ENCODE measurements at regions of chr20 and their contacts with region 1.

Region 1: GRCh38 chr20:21395666-21396598 is 1.4 kb downstream of the NKX2-4 start:
- DNase-seq: peak; percentile 43
- H3K4me3 Mint-ChIP-seq: peak overlapping the region; percentile 77
- H3K27ac Mint-ChIP-seq: peak overlapping the region; percentile 73
- H3K4me1 Mint-ChIP-seq: peaks cover 38% of the 10 kb centered on the region
- H3K27me3 Mint-ChIP-seq: peaks cover 77% of the 10 kb centered on the region

Region 2: DNA sequence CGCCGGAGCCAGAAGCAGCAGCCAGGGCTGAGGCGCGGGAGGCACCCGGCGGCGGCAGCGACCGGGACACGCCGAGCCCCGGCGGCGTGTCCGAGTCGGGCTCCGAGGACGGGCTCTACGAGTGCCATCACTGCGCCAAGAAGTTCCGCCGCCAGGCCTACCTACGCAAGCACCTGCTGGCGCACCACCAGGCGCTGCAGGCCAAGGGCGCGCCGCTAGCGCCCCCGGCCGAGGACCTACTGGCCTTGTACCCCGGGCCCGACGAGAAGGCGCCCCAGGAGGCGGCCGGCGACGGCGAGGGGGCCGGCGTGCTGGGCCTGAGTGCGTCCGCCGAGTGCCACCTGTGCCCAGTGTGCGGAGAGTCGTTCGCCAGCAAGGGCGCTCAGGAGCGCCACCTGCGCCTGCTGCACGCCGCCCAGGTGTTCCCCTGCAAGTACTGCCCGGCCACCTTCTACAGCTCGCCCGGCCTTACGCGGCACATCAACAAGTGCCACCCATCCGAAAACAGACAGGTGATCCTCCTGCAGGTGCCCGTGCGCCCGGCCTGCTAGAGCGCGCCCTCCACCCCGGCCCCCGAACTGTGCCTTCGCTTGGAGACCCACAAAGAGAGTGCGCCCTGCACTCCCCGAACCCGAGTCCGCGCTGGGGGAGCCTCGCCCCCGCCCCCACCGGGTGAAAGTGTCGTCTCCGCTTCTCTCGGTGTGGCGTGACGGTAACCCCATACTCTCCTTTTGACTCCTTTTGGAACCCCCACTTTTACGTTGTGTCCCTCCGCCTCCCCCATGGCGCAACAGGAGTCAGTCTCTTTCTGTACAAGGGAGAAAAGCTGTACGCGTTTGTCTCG is 1026.5 kb before region 1 on chr20:
- intact Hi-C with region 1: loop called (anchors 2 kb)
- DNase-seq: no peak
- H3K4me3 Mint-ChIP-seq: peak overlapping the region; percentile 88
- H3K27ac Mint-ChIP-seq: peak overlapping the region; percentile 89
- H3K4me1 Mint-ChIP-seq: peaks cover 28% of the 10 kb centered on the region
- H3K27me3 Mint-ChIP-seq: peaks cover 60% of the 10 kb centered on the region

Region 3: GRCh38 chr20:20860078-20860806 is 535.7 kb before region 1 on chr20:
- intact Hi-C with region 1: loop called (anchors 10 kb)
- DNase-seq: peak; percentile 64
- H3K4me3 Mint-ChIP-seq: no peak overlapping the region
- H3K27ac Mint-ChIP-seq: no peak overlapping the region
- H3K4me1 Mint-ChIP-seq: no peaks in the 10 kb centered on the region
- H3K27me3 Mint-ChIP-seq: peaks cover 4% of the 10 kb centered on the region

Region 4: DNA sequence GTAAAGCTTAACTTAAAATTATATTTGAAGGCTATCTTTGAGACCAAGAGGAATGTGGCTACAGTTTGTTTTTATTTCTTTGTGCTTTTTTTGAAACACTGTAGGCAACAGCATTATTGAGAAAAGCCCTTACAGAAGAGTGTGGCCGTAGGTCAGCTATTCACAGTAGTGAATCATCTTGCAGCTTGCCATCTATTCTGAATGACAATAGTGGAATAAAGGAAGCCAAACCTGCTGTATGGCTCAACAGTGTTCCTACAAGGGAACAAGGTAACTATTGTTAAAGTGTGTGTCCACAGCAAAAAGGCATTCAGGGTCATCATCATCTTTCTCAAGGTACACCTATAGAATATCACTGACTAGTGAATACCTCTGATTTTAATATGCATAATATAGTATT is 181.5 kb before region 1 on chr20:
- intact Hi-C with region 1: no loop called
- DNase-seq: no peak
- H3K4me3 Mint-ChIP-seq: no peak overlapping the region
- H3K27ac Mint-ChIP-seq: no peak overlapping the region
- H3K4me1 Mint-ChIP-seq: no peaks in the 10 kb centered on the region
- H3K27me3 Mint-ChIP-seq: no peaks in the 10 kb centered on the region

Region 5: DNA sequence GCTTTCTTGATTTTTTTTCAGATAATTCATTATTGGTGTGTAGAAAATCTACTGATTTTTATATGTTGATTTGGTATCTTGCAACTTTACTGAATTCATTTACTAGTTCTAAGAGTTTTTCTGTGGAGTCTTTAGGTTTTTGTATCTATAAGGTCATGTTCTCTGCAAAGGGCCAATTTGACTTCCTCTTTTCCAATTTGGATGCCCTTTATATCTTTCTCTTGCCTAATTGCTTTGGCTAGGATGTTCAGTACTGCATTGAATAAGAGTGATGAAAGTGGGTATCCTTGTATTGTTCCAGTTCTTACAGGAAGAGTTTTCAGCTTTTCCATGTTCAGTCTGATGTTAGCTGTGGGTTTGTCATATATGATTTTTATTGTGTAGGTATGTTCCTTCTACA is 15.8 kb after region 1 on chr20:
- intact Hi-C with region 1: no loop called
- DNase-seq: no peak
- H3K4me3 Mint-ChIP-seq: no peak overlapping the region
- H3K27ac Mint-ChIP-seq: no peak overlapping the region
- H3K4me1 Mint-ChIP-seq: no peaks in the 10 kb centered on the region
- H3K27me3 Mint-ChIP-seq: peaks cover 35% of the 10 kb centered on the region

Region 6: DNA sequence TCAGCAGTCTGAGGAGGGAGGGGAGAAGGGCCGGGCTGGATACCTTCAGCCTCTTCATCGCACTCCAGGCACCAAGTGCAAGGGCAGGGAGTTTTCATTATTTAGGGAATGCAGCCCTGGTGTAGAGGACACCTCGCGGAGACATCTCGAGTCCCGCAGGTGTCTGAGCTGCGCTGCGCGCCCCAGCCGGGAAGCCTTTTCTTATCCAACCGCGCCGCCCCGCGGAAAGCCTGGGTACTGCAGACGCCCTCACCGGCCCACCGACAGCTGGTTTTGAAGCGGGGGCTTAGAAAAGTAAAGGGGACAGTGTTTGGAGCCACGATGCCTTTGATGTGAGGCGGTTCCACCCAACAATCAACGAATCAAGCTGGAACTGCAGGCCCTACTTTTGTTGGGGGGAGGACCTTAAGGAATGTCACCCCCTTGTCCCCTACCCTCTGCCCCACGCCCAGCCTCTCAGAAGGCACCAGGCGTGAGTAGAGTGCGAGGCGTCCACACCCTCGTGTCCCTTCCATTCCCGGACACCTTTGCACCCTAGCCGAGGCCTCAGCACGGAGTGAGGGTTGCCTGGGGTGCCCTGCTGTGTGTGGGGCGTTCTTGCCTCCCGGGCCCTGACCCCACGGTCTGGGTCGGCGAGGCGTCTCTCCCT is 109.4 kb after region 1 on chr20:
- intact Hi-C with region 1: loop called (anchors 1 kb)
- DNase-seq: peak; percentile 60
- H3K4me3 Mint-ChIP-seq: peak overlapping the region; percentile 57
- H3K27ac Mint-ChIP-seq: peak overlapping the region; percentile 63
- H3K4me1 Mint-ChIP-seq: peaks cover 25% of the 10 kb centered on the region
- H3K27me3 Mint-ChIP-seq: peaks cover 51% of the 10 kb centered on the region

Region 7: GRCh38 chr20:21702553-21703470 is 306.9 kb after region 1 on chr20:
- intact Hi-C with region 1: loop called (anchors 5 kb)
- DNase-seq: no peak
- H3K4me3 Mint-ChIP-seq: no peak overlapping the region
- H3K27ac Mint-ChIP-seq: no peak overlapping the region
- H3K4me1 Mint-ChIP-seq: peaks cover 8% of the 10 kb centered on the region
- H3K27me3 Mint-ChIP-seq: peaks cover 81% of the 10 kb centered on the region

Region 8: GRCh38 chr20:22575087-22575721 is 1179.3 kb after region 1 on chr20:
- intact Hi-C with region 1: loop called (anchors 10 kb)
- DNase-seq: no peak
- H3K4me3 Mint-ChIP-seq: no peak overlapping the region
- H3K27ac Mint-ChIP-seq: no peak overlapping the region
- H3K4me1 Mint-ChIP-seq: no peaks in the 10 kb centered on the region
- H3K27me3 Mint-ChIP-seq: peaks cover 66% of the 10 kb centered on the region

Measured in activated T-helper 1 cell treated with anti-CD3 and anti-CD28 coated beads, Interleukin-12 subunit alpha, Interleukin-12 subunit beta, Interleukin-2, Interleukin-4 antibody, amounts not matched to agents 30 ng/mL and 10 ng/mL and 1 ng/mL, durations not matched to agents 14 hours and 24 hours and 36 hours (primary cell).